A673 (cell line): ENCODE measurements at regions of chr2 and their contacts with region 1.

Region 1: DNA sequence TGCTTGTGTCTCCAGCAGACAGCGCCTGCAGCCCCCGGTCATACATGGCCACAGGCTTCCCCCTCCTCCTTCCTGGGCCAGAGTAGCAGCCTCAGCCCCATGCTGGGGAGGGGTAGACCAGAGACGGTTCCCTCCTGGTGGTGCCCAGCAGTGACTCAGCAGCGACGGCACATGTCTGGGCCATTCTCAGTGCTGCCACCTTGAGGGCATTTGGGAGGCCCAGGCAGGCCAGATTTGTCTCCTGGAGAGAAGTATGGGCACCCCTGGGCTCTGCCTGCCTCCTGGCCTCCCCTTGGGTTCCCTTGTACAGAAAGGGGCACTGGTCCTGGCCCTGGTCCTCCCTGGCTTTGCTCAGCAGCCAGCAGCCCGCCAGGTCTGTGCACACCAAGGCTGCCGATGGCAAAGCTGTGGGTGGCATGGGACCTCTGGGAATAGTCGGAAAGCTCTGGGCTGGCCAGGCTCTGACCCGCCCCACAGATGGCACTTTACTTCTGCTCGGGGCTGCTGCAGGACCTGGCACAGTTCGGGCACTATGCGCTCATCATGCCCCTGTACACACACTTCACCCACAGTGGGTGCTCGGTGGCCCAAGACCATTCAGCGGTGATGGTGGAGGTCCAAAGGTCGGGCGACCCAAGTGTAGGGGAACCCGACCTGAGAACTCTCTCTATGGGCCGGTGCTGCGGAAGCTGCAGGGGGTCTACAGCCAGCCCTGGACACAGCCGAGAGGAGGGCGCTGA is 11.4 kb upstream of the ALPI start:
- DNase-seq: peak; percentile 86
- H3K4me3 ChIP-seq: no peak overlapping the region
- H3K27ac ChIP-seq: no peak overlapping the region
- H3K4me1 ChIP-seq: no peaks in the 10 kb centered on the region
- H3K27me3 ChIP-seq: no peaks in the 10 kb centered on the region
- CTCF ChIP-seq: peak; percentile 78

Region 2: DNA sequence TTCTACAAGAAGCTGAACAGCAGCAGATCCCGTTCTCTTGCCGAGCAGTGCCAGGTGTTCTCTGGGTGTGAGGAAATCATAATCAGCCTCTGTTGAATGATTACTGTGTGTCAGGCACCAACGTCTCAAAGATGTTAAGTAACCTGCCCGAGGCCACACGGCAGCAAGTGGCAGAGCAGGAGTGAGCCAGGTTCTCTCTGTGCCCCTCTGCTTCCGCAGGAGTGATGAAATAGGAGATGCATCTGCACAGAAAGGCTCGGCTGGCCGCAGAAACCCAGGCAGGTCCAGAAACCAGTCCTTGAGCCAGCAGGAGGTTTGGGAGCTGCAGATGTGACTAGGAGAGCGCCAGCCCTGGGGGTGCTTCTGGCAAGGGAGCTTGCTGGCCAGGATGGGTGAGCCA is 589.9 kb before region 1 on chr2:
- CTCF ChIA-PET with region 1: no interaction called
- POLR2A ChIA-PET with region 1: no interaction called
- intact Hi-C with region 1: loop called (anchors 5 kb)
- DNase-seq: no peak
- H3K4me3 ChIP-seq: no peak overlapping the region
- H3K27ac ChIP-seq: no peak overlapping the region
- H3K4me1 ChIP-seq: no peaks in the 10 kb centered on the region
- H3K27me3 ChIP-seq: peaks cover 12% of the 10 kb centered on the region
- CTCF ChIP-seq: no peak

Region 3: GRCh38 chr2:232339121-232340081 is 105.2 kb before region 1 on chr2:
- CTCF ChIA-PET with region 1: interaction called, 5 read pairs
- POLR2A ChIA-PET with region 1: no interaction called
- intact Hi-C with region 1: loop called (anchors 5 kb)
- DNase-seq: no peak
- H3K4me3 ChIP-seq: no peak overlapping the region
- H3K27ac ChIP-seq: no peak overlapping the region
- H3K4me1 ChIP-seq: no peaks in the 10 kb centered on the region
- H3K27me3 ChIP-seq: no peaks in the 10 kb centered on the region
- CTCF ChIP-seq: 0 out of 2 replicates have a peak, but pooled peaks have one; percentile 24

Region 4: GRCh38 chr2:232521959-232522622 is 77.5 kb after region 1 on chr2:
- CTCF ChIA-PET with region 1: interaction called, 3 read pairs
- POLR2A ChIA-PET with region 1: no interaction called
- intact Hi-C with region 1: loop called (anchors 2 kb)
- DNase-seq: peak; percentile 37
- H3K4me3 ChIP-seq: peak overlapping the region; percentile 19
- H3K27ac ChIP-seq: no peak overlapping the region
- H3K4me1 ChIP-seq: peaks cover 7% of the 10 kb centered on the region
- H3K27me3 ChIP-seq: peaks cover 31% of the 10 kb centered on the region
- CTCF ChIP-seq: peak; percentile 55; the same call in 1 of the 2 replicates